Activated CD4-positive, alpha-beta memory T cell treated with anti-CD3 and anti-CD28 coated beads for 36 hours (primary cell): ENCODE measurements at regions of chr2 and their contacts with region 1.

Region 1: DNA sequence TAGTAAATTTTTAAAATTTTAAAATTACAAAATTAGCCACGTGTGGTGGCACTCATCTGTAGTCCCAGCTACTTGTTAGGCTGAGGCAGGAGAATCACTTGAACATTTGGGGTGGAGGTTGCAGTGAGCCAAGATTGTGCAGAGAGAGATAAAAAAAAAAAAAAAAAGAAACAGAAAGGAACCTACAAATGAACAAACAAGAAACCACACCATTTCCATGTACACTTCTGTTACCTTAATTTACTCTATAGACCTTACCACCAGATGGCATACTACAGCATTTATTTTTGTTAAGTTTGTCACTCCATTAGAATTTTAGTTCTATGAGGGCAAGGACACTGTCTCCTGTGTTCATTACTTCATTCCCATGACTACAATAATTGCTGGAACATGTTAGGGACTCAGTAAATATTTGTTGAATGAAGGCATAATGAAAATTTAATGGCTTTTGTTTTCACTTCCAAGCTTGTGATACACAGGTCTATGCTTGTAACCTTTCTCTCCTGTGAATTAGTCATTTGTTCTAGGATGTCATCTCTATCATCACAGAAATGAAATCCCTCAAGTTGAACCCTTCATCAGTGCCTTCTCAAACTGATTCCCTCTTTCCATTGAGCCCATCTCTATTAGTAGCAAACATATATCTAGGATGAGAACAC is 76.0 kb downstream of the ARHGAP15 start:
- DNase-seq: no peak
- H3K4me3 Mint-ChIP-seq: no peak overlapping the region
- H3K27ac Mint-ChIP-seq: peak overlapping the region; percentile 63
- H3K4me1 Mint-ChIP-seq: peaks cover 41% of the 10 kb centered on the region
- H3K27me3 Mint-ChIP-seq: no peaks in the 10 kb centered on the region

Region 2: GRCh38 chr2:143186876-143187275 is 18.4 kb before region 1 on chr2:
- CTCF ChIA-PET with region 1: interaction called, 7 read pairs
- POLR2A ChIA-PET with region 1: no interaction called
- intact Hi-C with region 1: loop called (anchors 2 kb)
- DNase-seq: no peak
- H3K4me3 Mint-ChIP-seq: no peak overlapping the region
- H3K27ac Mint-ChIP-seq: no peak overlapping the region
- H3K4me1 Mint-ChIP-seq: peaks cover 39% of the 10 kb centered on the region
- H3K27me3 Mint-ChIP-seq: no peaks in the 10 kb centered on the region

Region 3: DNA sequence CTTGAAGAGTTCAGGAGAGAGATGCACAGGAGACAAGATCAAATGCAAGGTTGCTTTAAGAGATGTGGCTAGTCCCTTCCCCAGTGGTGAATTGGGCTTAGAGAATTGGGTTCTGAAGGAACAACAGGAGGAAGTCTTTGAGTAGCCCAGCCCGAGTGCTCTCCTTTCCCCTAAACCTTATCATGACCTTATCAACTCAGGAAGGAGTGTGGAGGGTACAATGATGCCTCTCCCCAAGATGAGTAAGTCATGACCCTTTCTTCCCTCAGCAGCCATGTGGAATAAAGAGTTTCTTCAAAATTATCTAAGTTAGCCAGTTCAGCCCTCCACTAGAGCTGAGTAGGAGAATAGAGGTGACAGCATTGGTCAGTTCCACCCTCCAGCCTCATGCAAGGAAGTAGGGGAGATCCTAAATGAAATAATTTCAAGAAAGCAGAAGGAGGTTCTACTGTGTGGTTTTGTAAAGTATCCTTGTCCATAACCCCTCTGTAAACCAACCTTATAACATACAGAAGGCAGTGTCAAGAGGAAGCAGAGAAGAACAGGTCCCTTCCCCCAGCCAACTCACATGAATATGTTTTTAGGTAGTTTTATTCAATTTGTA is 12.4 kb after region 1 on chr2:
- CTCF ChIA-PET with region 1: interaction called, 25 read pairs
- POLR2A ChIA-PET with region 1: no interaction called
- intact Hi-C with region 1: loop called (anchors 1 kb)
- DNase-seq: no peak
- H3K4me3 Mint-ChIP-seq: no peak overlapping the region
- H3K27ac Mint-ChIP-seq: peak overlapping the region; percentile 38
- H3K4me1 Mint-ChIP-seq: peaks cover 38% of the 10 kb centered on the region
- H3K27me3 Mint-ChIP-seq: no peaks in the 10 kb centered on the region

Region 4: GRCh38 chr2:143226714-143227541 is 21.7 kb after region 1 on chr2:
- CTCF ChIA-PET with region 1: interaction called, 25 read pairs
- POLR2A ChIA-PET with region 1: no interaction called
- intact Hi-C with region 1: loop called (anchors 1 kb)
- DNase-seq: no peak
- H3K4me3 Mint-ChIP-seq: no peak overlapping the region
- H3K27ac Mint-ChIP-seq: no peak overlapping the region
- H3K4me1 Mint-ChIP-seq: peaks cover 38% of the 10 kb centered on the region
- H3K27me3 Mint-ChIP-seq: no peaks in the 10 kb centered on the region